ENCODE measurements at regions of chr6 and their contacts with region 1.

Region 1: GRCh38 chr6:85678602-85679444 is 36.1 kb upstream of the SYNCRIP start:
- DNase-seq: peak; percentile 97 to 100 (median 98)
- ATAC-seq: peak; percentile 87
- H3K4me3 ChIP-seq: peak overlapping the region; percentile 72
- H3K4me3 Mint-ChIP-seq: peak overlapping the region; percentile 98
- H3K27ac ChIP-seq: peak overlapping the region; percentile 90 to 94
- H3K27ac Mint-ChIP-seq: peak overlapping the region; percentile 97
- H3K4me1 ChIP-seq: peaks cover 20% of the 10 kb centered on the region
- H3K4me1 Mint-ChIP-seq: peaks cover 51% of the 10 kb centered on the region
- H3K27me3 ChIP-seq: no peaks in the 10 kb centered on the region
- H3K27me3 Mint-ChIP-seq: no peaks in the 10 kb centered on the region
- CTCF ChIP-seq: no peak

Region 2: GRCh38 chr6:83859410-83860358 is 1819.1 kb before region 1 on chr6 and contains the start of gene CYB5R4:
- CTCF ChIA-PET with region 1: no interaction called
- POLR2A ChIA-PET with region 1: interaction called, 11 read pairs
- intact Hi-C with region 1: no loop called
- DNase-seq: peak; percentile 87 to 96 (median 92)
- ATAC-seq: peak; percentile 93
- H3K4me3 ChIP-seq: peak within 1 kb of the TSS; percentile 64
- H3K4me3 Mint-ChIP-seq: peak within 1 kb of the TSS; percentile 91
- H3K27ac ChIP-seq: peak within 1 kb of the TSS; percentile 78 to 81
- H3K27ac Mint-ChIP-seq: peak within 1 kb of the TSS; percentile 78
- H3K4me1 ChIP-seq: peaks cover 10% of the 10 kb centered on the region
- H3K4me1 Mint-ChIP-seq: peaks cover 48% of the 10 kb centered on the region
- H3K27me3 ChIP-seq: peaks cover 11 to 13% of the 10 kb centered on the region in 2 experiments
- H3K27me3 Mint-ChIP-seq: peaks cover 11% of the 10 kb centered on the region
- CTCF ChIP-seq: peak; percentile 49
- total RNA-seq, gene CYB5R4: 15.5 to 16.3 TPM

Region 3: DNA sequence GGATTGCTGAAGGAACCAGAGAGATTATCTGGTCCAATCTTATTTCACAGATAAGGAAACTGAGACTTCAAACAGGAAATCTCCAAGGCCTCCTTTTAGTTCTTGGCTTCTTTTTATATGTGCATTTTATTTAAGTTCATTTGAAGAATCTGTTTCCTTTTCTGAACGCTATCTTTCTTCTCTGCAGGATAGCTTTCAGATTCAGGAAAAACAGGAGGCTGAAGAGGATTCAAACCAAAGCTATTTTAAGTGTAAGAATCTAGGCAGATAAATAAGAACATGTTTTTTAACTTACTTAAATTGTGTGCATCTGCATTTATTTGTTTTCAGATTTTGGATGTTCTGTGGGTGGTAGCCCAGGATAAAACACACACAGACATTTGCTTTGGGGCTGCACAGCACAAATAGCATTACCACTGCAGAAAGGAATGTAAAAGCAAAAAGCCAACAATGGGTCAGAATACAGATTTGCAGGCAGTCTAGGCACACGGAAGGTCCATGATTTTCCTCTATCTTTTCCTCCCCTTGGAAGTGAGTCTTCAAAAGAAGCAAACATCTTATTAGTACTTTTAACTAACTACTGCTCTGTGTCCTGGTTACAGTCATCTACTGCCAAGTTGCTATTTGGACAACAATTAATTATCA is 725.6 kb before region 1 on chr6:
- CTCF ChIA-PET with region 1: no interaction called
- POLR2A ChIA-PET with region 1: no interaction called
- intact Hi-C with region 1: no loop called
- DNase-seq: no peak
- ATAC-seq: no peak
- H3K4me3 ChIP-seq: no peak overlapping the region
- H3K4me3 Mint-ChIP-seq: no peak overlapping the region
- H3K27ac ChIP-seq: no peak overlapping the region
- H3K27ac Mint-ChIP-seq: no peak overlapping the region
- H3K4me1 ChIP-seq: no peaks in the 10 kb centered on the region
- H3K4me1 Mint-ChIP-seq: no peaks in the 10 kb centered on the region
- H3K27me3 ChIP-seq: no peaks in the 10 kb centered on the region
- H3K27me3 Mint-ChIP-seq: no peaks in the 10 kb centered on the region
- CTCF ChIP-seq: no peak

Region 4: GRCh38 chr6:85449818-85450759 is 228.7 kb before region 1 on chr6 and contains the start of gene NT5E:
- CTCF ChIA-PET with region 1: no interaction called
- POLR2A ChIA-PET with region 1: interaction called, 11 read pairs
- intact Hi-C with region 1: no loop called
- DNase-seq: peak in 6 of 14 experiments; percentile 7 to 62 (median 30)
- ATAC-seq: peak; percentile 54
- H3K4me3 ChIP-seq: peak within 1 kb of the TSS; percentile 51
- H3K4me3 Mint-ChIP-seq: peak within 1 kb of the TSS; percentile 96
- H3K27ac ChIP-seq: no peak within 1 kb of the TSS
- H3K27ac Mint-ChIP-seq: peak within 1 kb of the TSS; percentile 78
- H3K4me1 ChIP-seq: peaks cover 26% of the 10 kb centered on the region
- H3K4me1 Mint-ChIP-seq: peaks cover 55% of the 10 kb centered on the region
- H3K27me3 ChIP-seq: peaks cover 19 to 37% of the 10 kb centered on the region in 2 experiments
- H3K27me3 Mint-ChIP-seq: peaks cover 73% of the 10 kb centered on the region
- CTCF ChIP-seq: no peak
- total RNA-seq, gene NT5E: 2.7 to 3.3 TPM

Region 5: GRCh38 chr6:85612690-85613474 is 65.9 kb before region 1 on chr6:
- CTCF ChIA-PET with region 1: interaction called, 4 read pairs
- POLR2A ChIA-PET with region 1: interaction called, 10 read pairs
- intact Hi-C with region 1: no loop called
- DNase-seq: no peak
- ATAC-seq: no peak
- H3K4me3 ChIP-seq: no peak overlapping the region
- H3K4me3 Mint-ChIP-seq: no peak overlapping the region
- H3K27ac ChIP-seq: no peak overlapping the region
- H3K27ac Mint-ChIP-seq: peak overlapping the region; percentile 33
- H3K4me1 ChIP-seq: no peaks in the 10 kb centered on the region
- H3K4me1 Mint-ChIP-seq: peaks cover 5% of the 10 kb centered on the region
- H3K27me3 ChIP-seq: no peaks in the 10 kb centered on the region
- H3K27me3 Mint-ChIP-seq: no peaks in the 10 kb centered on the region
- CTCF ChIP-seq: no peak

Region 6: GRCh38 chr6:85642774-85643536 is 35.9 kb before region 1 on chr6 and contains the start of gene SYNCRIP:
- CTCF ChIA-PET with region 1: interaction called, 14 read pairs
- POLR2A ChIA-PET with region 1: interaction called, 849 read pairs
- intact Hi-C with region 1: loop called (anchors 1 kb)
- DNase-seq: peak; percentile 94 to 99 (median 98)
- ATAC-seq: peak; percentile 78
- H3K4me3 ChIP-seq: peak within 1 kb of the TSS; percentile 88
- H3K4me3 Mint-ChIP-seq: peak within 1 kb of the TSS; percentile 100
- H3K27ac ChIP-seq: peak within 1 kb of the TSS; percentile 96 to 99
- H3K27ac Mint-ChIP-seq: peak within 1 kb of the TSS; percentile 100
- H3K4me1 ChIP-seq: peaks cover 15% of the 10 kb centered on the region
- H3K4me1 Mint-ChIP-seq: peaks cover 55% of the 10 kb centered on the region
- H3K27me3 ChIP-seq: no peaks in the 10 kb centered on the region
- H3K27me3 Mint-ChIP-seq: no peaks in the 10 kb centered on the region
- CTCF ChIP-seq: no peak
- total RNA-seq, gene SYNCRIP: 53.2 to 58.3 TPM

Region 7: DNA sequence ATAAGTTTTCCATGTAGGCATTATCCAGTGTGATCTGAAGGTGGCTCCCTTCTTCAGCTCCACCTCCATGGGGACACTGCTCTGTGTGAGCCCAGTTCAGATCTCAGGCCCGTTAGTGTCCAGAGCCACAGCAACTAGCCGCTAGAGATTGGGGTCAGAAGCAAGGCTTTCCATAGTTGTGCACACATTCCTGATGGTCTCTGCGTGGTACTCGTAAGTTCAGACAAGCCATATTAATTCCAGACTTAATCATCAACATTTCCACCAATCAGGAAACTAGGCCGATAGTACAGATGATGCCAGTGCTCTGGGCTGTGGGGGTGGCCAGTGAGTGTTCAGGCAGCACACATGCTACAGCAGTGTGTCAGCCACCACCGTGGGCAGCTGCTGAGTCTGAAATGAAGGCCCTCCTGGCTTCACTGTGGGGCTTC is 18.6 kb before region 1 on chr6:
- CTCF ChIA-PET with region 1: interaction called, 3 read pairs
- POLR2A ChIA-PET with region 1: interaction called, 12 read pairs
- intact Hi-C with region 1: no loop called
- DNase-seq: no peak
- ATAC-seq: no peak
- H3K4me3 ChIP-seq: no peak overlapping the region
- H3K4me3 Mint-ChIP-seq: no peak overlapping the region
- H3K27ac ChIP-seq: no peak overlapping the region
- H3K27ac Mint-ChIP-seq: no peak overlapping the region
- H3K4me1 ChIP-seq: no peaks in the 10 kb centered on the region
- H3K4me1 Mint-ChIP-seq: no peaks in the 10 kb centered on the region
- H3K27me3 ChIP-seq: no peaks in the 10 kb centered on the region
- H3K27me3 Mint-ChIP-seq: no peaks in the 10 kb centered on the region
- CTCF ChIP-seq: no peak

Measured in CD4-positive, alpha-beta T cell (primary cell).